ENCODE measurements at regions of chrX and their contacts with region 1.

Region 1: GRCh38 chrX:55717521-55718497 is at the start of gene RRAGB:
- DNase-seq: peak; percentile 93 to 96
- H3K4me3 ChIP-seq: peak within 1 kb of the TSS; percentile 59 to 81
- H3K27ac ChIP-seq: peak within 1 kb of the TSS; percentile 73 to 85
- H3K4me1 ChIP-seq: peaks cover 0 to 4% of the 10 kb centered on the region in 2 donors
- H3K27me3 ChIP-seq: no peaks in the 10 kb centered on the region
- CTCF ChIP-seq: peak; percentile 4 to 60 (median 49)
- total RNA-seq, gene RRAGB: 9.9 TPM

Region 2: DNA sequence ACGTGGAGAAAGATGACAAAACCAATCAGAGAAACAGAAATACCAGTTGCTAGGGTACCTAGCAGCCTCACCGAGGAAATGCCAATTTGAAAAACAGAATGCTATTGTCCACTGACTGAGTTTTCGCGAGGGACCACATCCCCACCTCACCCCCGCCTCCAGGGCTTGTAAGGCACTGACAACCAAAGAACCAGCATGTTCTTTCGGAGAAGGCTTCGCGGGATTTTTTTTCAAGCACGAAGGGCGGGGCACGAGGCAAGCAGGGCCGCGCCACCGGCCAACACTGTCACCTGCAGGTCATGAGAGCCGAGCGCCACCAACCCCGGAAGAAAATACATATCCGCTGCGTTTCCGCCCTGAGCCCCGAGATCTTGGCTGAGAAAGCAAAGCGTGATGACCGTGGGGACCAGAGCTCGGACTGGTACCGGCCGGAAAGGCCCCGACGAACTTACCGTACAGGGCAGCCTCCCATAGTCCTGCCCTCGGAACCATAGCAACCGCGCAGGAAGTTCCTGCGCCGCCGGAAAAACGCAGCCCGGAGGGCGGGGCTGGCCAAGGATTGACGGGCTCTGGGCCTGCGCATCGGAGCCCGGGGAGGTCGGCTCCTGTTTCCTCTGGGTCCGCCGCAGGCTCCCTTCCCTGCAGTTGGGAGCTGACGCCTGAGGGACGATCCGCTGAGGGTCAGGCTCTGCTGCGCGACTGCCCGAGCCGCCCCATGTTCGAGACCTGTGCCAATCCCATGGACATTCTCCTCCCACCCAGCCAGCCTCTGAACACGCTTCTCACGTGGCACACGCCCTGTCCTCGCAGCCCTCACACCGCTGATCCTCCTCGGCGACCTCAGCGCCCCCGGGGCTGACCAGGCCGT is 556.9 kb before region 1 on chrX:
- intact Hi-C with region 1: loop called (anchors 5 kb)
- DNase-seq: peak; percentile 55 to 92
- H3K4me3 ChIP-seq: peak overlapping the region; percentile 46 to 68
- H3K27ac ChIP-seq: peak overlapping the region; percentile 87 to 89
- H3K4me1 ChIP-seq: no peaks in the 10 kb centered on the region
- H3K27me3 ChIP-seq: no peaks in the 10 kb centered on the region
- CTCF ChIP-seq: peak; percentile 24 to 51 (median 51)

Region 3: DNA sequence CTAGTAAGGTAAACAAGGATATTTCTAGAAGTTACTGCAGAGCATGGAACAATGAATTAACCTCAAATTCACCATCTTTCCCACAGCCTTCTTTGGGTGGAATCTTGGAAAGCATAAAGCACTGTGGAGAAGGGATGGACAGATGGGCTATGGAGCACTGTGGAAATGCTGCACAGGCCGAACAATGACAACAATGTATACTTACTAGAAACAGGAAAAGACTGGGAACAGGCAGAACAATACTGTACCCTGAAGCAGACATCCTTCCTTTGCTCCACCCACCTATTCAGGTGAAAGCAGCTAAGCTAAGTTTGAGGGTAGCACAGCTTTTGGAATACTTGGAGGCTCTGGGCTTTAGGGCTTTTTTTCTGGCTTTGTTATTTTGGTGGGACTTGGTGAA is 263.8 kb after region 1 on chrX:
- intact Hi-C with region 1: no loop called
- DNase-seq: no peak
- H3K4me3 ChIP-seq: no peak overlapping the region
- H3K27ac ChIP-seq: no peak overlapping the region
- H3K4me1 ChIP-seq: no peaks in the 10 kb centered on the region
- H3K27me3 ChIP-seq: no peaks in the 10 kb centered on the region
- CTCF ChIP-seq: no peak

Measured in ascending aorta (tissue), 2 donors.